ENCODE measurements at regions of chr3 and their contacts with region 1.

Region 1: DNA sequence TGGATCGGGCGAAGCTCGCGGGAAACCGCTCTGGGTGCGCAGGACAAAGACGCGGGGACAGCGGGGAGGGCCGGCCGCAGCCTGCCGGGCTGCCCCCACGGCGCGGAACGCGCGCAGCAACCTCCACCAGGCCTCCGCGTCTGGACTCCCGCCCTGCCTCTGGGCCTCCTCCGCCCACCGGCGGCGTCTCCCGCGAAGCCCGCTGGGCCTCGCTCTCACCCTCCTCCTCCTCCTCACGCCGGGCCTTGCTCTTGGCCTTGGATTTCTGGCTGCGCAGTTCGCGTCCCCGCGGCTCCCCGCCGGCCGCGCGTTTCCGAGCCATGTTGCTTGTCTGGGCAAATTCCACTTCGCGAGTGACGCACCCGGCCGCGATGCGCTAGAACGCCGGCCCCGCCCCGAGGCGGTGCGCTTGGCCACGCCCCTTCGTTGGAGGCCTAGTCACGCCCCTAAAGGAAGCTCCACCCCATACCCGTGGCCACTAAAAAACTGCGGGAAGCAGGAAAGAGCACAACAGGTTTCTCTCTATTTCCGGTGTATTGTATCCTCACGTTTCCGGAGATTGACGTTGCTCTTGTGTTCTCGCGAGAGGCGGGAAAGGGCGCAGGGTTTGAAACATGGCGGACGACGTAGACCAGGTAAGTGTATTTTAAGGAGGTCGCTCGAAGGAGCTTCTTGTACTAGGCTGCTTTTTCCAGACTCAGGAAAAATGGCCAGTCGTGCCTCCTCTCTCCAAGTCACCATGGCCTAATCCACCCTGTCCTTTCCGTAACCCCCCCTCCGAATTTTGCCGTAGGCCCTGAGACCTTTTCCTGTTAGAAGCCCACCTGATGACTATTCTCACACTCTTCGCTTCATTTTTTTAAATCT is at the starts of genes LSM3 and XPC:
- DNase-seq: peak; percentile 92
- ATAC-seq: peak; percentile 99
- H3K4me3 Mint-ChIP-seq: peak within 1 kb of the TSS; percentile 93
- H3K27ac Mint-ChIP-seq: peak within 1 kb of the TSS; percentile 99
- H3K4me1 Mint-ChIP-seq: peaks cover 29% of the 10 kb centered on the region
- H3K27me3 Mint-ChIP-seq: no peaks in the 10 kb centered on the region
- CTCF ChIP-seq: no peak
- total RNA-seq, gene LSM3: 17.7 to 21.4 TPM (median 17.8 TPM) in 3 replicates
- total RNA-seq, gene XPC: 31.7 to 34.9 TPM (median 32.6 TPM) in 3 replicates

Region 2: DNA sequence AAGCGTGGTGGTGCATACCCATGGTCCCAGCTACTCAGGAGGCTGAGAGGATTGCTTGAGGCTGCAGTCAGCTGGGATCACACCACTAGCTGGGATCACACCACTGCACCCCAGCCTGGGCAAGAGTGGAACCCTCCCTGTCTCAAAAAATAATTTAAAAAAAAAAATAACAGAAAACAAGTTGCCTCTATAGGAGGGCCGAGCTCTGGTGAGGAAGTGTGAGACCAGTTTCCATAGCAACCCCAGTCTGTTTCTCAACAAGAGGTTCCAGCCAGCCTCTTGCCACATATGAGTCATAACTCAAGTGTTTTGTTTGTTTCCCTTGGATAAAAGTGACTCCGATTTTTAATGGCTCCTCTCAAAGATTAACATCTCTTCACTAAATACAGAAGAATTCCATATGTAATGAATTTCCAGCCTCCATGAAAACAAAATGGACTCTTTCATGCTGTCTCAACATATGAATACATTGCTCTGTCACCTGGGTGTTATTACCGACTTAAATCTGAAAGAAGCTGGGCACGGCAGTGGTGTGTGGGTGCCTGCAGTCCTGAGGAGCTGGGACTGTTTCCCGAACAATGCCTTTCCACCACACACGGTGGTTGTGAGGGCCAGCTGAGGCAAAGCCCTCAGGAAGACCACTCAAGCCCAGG is 33.9 kb before region 1 on chr3:
- CTCF ChIA-PET with region 1: interaction called, 10 read pairs
- POLR2A ChIA-PET with region 1: interaction called, 3 read pairs
- DNase-seq: no peak
- ATAC-seq: peak; percentile 10; the same call in 1 of the 2 replicates
- H3K4me3 Mint-ChIP-seq: no peak overlapping the region
- H3K27ac Mint-ChIP-seq: peak overlapping the region; percentile 88
- H3K4me1 Mint-ChIP-seq: peaks cover 31% of the 10 kb centered on the region
- H3K27me3 Mint-ChIP-seq: no peaks in the 10 kb centered on the region
- CTCF ChIP-seq: no peak